Activated T-helper 1 cell treated with anti-CD3 and anti-CD28 coated beads, Interleukin-12 subunit alpha, Interleukin-12 subunit beta, Interleukin-2, Interleukin-4 antibody, amounts not matched to agents 30 ng/mL and 10 ng/mL and 1 ng/mL, durations not matched to agents 14 hours and 24 hours and 36 hours (primary cell): ENCODE measurements at regions of chr14 and their contacts with region 1.

Region 1: GRCh38 chr14:58199726-58200479 is at the start of gene ACTR10:
- DNase-seq: peak; percentile 80
- H3K4me3 Mint-ChIP-seq: peak within 1 kb of the TSS; percentile 93
- H3K27ac Mint-ChIP-seq: peak within 1 kb of the TSS; percentile 86
- H3K4me1 Mint-ChIP-seq: peaks cover 24% of the 10 kb centered on the region
- H3K27me3 Mint-ChIP-seq: peaks cover 1% of the 10 kb centered on the region
- total RNA-seq, gene ACTR10: 38.3 and 40.3 TPM in 2 replicates

Region 2: DNA sequence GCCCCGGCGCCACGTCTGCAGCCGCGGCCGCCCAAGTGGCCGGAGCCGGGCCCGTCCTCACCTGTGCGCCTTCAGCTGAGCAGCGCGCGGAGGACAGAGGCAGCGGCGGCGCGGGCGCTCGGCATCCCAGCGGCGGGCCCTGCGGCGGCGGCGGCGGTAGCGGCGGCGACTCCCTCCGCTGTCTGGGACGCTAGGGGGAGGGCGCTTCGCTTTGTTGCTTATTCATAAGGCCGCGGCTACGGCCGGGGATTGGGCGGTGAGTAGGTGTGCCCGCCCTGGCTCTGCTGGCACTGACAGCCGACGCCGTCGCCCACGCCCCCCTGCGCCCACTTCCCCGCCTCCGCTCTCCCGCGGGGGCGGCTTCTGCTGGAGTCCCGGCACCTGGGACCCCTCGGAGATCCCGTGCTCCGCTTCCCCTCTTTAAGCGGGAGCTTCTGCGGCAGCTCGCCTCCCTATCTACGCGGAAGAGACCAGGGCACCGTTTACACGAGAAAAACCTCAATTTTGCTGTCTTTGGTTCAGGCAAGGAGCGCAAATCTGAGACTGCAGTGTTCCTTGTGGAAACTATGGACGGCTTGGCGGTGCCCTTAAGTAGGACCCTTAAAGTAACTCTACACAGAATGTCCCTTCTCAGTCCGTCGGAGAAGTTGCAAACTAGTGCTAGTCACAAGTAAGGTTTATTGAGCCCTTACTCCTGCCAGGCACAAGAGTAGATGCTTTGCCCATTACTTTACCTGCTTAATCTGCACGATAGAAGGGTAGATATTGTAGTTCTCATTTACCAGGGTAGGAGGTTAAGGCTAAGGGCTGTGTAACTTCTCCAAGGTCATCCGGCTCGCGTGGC is 47.7 kb before region 1 on chr14 and contains the start of gene ARMH4:
- intact Hi-C with region 1: no loop called
- DNase-seq: peak; percentile 66
- H3K4me3 Mint-ChIP-seq: peak within 1 kb of the TSS; percentile 80
- H3K27ac Mint-ChIP-seq: no peak within 1 kb of the TSS
- H3K4me1 Mint-ChIP-seq: peaks cover 21% of the 10 kb centered on the region
- H3K27me3 Mint-ChIP-seq: peaks cover 51% of the 10 kb centered on the region
- total RNA-seq, gene ARMH4: not detected in 2 replicates

Region 3: GRCh38 chr14:58189176-58189575 is 10.7 kb before region 1 on chr14:
- intact Hi-C with region 1: no loop called
- DNase-seq: no peak
- H3K4me3 Mint-ChIP-seq: no peak overlapping the region
- H3K27ac Mint-ChIP-seq: no peak overlapping the region
- H3K4me1 Mint-ChIP-seq: no peaks in the 10 kb centered on the region
- H3K27me3 Mint-ChIP-seq: peaks cover 3% of the 10 kb centered on the region

Region 4: GRCh38 chr14:58215191-58215914 is 15.4 kb after region 1 on chr14:
- intact Hi-C with region 1: loop called (anchors 1 kb)
- DNase-seq: no peak
- H3K4me3 Mint-ChIP-seq: no peak overlapping the region
- H3K27ac Mint-ChIP-seq: peak overlapping the region; percentile 71
- H3K4me1 Mint-ChIP-seq: peaks cover 6% of the 10 kb centered on the region
- H3K27me3 Mint-ChIP-seq: no peaks in the 10 kb centered on the region

Region 5: DNA sequence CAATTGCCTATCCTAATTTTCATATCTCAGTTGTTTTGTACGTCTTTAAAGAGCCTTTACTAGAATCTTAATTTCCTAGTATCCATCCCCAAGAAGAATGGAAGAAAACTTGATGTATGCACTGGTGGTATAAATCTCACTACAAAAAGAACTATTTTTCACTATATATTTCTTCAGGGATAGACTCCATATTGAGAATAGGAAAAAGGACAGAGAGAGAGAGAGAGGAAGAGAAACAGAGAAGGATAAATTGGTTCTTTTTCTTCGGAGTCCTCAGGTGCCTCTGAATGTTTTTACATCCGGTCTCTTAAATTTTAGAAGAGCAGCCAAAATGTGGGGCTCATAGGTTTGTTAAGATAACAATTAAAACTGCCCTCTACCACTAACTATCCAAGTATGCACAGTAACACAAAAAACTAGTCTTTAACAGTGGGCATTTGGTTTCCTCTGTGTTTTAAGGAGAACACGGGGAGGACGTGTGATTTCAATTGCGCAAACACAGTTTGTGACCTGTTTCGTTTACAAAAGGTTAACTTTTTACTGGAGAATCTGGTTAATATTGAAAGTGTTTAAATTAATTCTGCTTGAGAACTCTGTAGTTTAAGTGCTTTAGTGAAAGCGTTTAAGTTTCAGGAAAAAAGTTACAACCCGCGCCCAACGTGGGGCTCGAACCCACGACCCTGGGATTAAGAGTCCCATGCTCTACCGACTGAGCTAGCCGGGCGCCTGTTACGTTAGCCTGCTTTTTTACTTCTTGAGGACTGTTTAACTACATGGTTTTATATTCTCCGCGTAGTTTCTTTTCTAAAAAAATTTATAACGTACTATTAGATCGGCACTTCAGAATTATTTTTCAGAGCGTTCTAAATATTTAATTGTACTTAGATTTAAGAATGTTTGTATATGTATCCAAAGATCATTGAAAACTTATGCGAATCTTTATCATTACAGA is 39.6 kb after region 1 on chr14:
- intact Hi-C with region 1: loop called (anchors 1 kb)
- DNase-seq: peak; percentile 68
- H3K4me3 Mint-ChIP-seq: no peak overlapping the region
- H3K27ac Mint-ChIP-seq: no peak overlapping the region
- H3K4me1 Mint-ChIP-seq: peaks cover 20% of the 10 kb centered on the region
- H3K27me3 Mint-ChIP-seq: no peaks in the 10 kb centered on the region